Activated T-helper 1 cell treated with anti-CD3 and anti-CD28 coated beads, Interleukin-12 subunit alpha, Interleukin-12 subunit beta, Interleukin-2, Interleukin-4 antibody, amounts not matched to agents 30 ng/mL and 10 ng/mL and 1 ng/mL, durations not matched to agents 14 hours and 24 hours and 36 hours (primary cell): ENCODE measurements at regions of chr21 and their contacts with region 1.

Region 1: GRCh38 chr21:28884976-28885852 is 107.5 kb downstream of the LTN1 start:
- DNase-seq: peak; percentile 95
- H3K4me3 Mint-ChIP-seq: peak overlapping the region; percentile 95
- H3K27ac Mint-ChIP-seq: peak overlapping the region; percentile 99
- H3K4me1 Mint-ChIP-seq: peaks cover 21% of the 10 kb centered on the region
- H3K27me3 Mint-ChIP-seq: peaks cover 5% of the 10 kb centered on the region

Region 2: GRCh38 chr21:28745131-28746016 is 139.8 kb before region 1 on chr21:
- intact Hi-C with region 1: loop called (anchors 1 kb)
- DNase-seq: peak; percentile 46
- H3K4me3 Mint-ChIP-seq: no peak overlapping the region
- H3K27ac Mint-ChIP-seq: no peak overlapping the region
- H3K4me1 Mint-ChIP-seq: no peaks in the 10 kb centered on the region
- H3K27me3 Mint-ChIP-seq: no peaks in the 10 kb centered on the region

Region 3: DNA sequence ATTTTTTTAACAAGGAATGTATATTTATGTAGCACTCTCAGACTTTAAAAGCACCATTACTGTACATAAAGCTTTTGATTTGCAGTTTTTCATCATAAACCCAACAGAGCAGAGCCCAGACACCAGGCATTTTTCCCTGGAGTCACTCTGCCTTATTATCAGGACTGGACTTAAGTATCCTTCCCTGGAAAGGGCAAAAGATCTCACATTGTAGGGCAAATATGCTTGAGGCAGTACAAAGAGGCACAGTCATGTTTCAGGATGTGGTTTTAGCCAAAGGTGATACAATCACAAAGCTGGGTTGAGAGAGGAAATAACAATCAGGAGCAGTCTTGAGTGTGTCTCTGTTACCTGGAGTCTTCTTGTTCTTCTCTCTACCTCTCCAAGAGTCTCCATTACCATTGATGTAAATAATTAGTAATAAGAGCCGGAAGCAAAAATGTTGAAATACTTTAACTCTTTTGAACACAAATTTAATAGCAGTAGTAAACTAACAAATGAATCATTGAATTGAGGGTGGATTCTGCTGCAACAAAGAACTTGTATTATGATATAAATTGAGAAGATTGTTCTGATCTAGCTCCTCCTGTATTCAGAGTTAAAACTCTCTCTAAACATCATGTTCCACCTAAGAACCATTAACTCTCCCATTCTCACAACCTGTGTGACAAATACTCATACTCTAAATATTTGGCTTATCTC is 53.0 kb before region 1 on chr21:
- intact Hi-C with region 1: loop called (anchors 1 kb)
- DNase-seq: peak; percentile 33
- H3K4me3 Mint-ChIP-seq: peak overlapping the region; percentile 70
- H3K27ac Mint-ChIP-seq: peak overlapping the region; percentile 88
- H3K4me1 Mint-ChIP-seq: peaks cover 74% of the 10 kb centered on the region
- H3K27me3 Mint-ChIP-seq: peaks cover 2% of the 10 kb centered on the region

Region 4: DNA sequence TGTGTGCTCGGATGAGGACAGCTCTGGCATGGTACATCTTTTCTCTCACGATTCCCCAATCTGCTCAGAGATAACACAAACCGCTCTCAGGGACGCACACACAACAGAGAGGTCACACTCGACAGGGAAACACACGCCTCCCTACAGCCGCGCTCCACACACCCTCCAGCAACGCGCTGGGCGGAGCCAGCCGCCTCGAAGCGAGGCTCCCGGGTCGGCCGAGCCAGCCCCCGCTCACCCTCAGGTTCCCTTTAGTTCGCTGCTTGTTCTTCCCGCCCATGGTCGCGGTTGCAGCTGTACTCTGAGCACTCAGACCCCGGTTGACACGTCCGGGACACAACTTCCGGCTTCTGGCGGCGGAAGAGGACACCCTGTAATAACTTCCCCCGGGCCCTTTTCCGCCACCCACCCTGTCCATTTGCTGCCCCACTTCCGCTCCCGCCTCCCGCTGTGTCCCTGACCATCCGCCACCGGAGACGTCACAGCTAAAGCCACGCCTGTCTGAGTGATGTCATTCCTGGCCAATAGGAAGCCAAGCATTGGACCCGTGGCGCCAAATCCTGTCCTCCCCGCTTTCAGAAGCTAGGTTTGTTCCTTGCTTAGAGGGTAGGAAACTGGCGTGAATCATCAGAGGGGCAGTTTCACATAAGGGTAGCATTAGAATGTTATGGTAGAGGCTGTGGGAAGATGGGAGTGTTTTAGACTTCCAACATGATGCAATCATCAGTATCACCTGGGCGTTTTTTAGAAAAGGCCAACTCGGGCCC is 107.5 kb after region 1 on chr21 and contains the start of gene LTN1:
- intact Hi-C with region 1: loop called (anchors 1 kb)
- DNase-seq: peak; percentile 98
- H3K4me3 Mint-ChIP-seq: peak within 1 kb of the TSS; percentile 97
- H3K27ac Mint-ChIP-seq: peak within 1 kb of the TSS; percentile 97
- H3K4me1 Mint-ChIP-seq: peaks cover 47% of the 10 kb centered on the region
- H3K27me3 Mint-ChIP-seq: no peaks in the 10 kb centered on the region
- total RNA-seq, gene LTN1: 25.6 and 28.4 TPM in 2 replicates

Region 5: DNA sequence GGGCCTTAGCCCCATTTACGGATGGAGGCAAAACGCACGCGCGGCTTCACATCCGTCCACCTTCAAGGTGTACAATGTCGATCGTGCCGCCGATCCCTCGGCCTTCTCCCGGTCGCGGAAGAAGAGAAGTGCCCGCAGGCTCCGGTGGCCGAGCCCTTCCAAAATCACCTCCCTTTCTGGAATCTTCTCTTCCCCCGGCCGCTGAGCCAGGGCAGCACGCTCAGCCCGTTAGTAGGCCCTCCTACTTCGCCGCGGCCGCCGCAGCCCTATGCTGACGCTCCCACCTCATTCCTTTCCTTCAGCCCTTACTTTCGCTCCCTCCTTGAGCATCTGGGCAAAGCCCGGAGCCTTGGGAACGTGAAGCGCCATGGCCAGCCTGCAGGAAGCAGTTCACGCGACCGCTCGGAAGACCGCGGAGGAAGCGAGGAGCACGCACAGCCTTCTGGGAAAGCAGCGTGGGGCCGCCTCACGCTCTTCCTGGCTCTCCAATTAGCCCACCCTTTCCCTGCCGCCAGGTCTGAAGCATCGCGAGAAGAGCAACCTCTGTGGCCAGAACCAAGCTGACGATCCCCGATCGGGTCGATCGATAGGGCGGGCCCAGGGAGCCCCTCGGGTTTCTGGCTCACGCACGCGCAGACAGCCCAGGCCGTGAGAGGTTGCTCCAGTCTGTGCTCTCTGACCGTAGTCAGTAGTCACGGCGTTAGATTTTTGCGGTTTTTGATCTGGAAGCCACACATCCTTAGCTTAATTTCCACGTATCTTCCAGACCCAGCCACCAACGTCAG is 188.2 kb after region 1 on chr21 and contains the start of gene CCT8:
- intact Hi-C with region 1: loop called (anchors 2 kb)
- DNase-seq: peak; percentile 98
- H3K4me3 Mint-ChIP-seq: peak within 1 kb of the TSS; percentile 99
- H3K27ac Mint-ChIP-seq: peak within 1 kb of the TSS; percentile 98
- H3K4me1 Mint-ChIP-seq: peaks cover 58% of the 10 kb centered on the region
- H3K27me3 Mint-ChIP-seq: no peaks in the 10 kb centered on the region
- total RNA-seq, gene CCT8: 394 and 400 TPM in 2 replicates